Naive thymus-derived CD8-positive, alpha-beta T cell (primary cell): ENCODE measurements at regions of chr6 and their contacts with region 1.

Region 1: GRCh38 chr6:20366091-20366832 is 35.4 kb upstream of the E2F3 start:
- DNase-seq: peak; percentile 7 to 81 (median 42)
- ATAC-seq: peak; percentile 85 to 94
- H3K4me3 Mint-ChIP-seq: peak overlapping the region; percentile 64 to 90 (median 81)
- H3K27ac Mint-ChIP-seq: peak overlapping the region; percentile 86 to 99 (median 96)
- H3K4me1 Mint-ChIP-seq: peaks cover 34 to 66% (median 64%) of the 10 kb centered on the region in 4 donors
- H3K27me3 Mint-ChIP-seq: no peaks in the 10 kb centered on the region

Region 2: GRCh38 chr6:20137240-20137639 is 229.0 kb before region 1 on chr6:
- POLR2A ChIA-PET with region 1: no interaction called
- DNase-seq: no peak
- ATAC-seq: no peak
- H3K4me3 Mint-ChIP-seq: no peak overlapping the region
- H3K27ac Mint-ChIP-seq: no peak overlapping the region
- H3K4me1 Mint-ChIP-seq: no peaks in the 10 kb centered on the region
- H3K27me3 Mint-ChIP-seq: no peaks in the 10 kb centered on the region

Region 3: DNA sequence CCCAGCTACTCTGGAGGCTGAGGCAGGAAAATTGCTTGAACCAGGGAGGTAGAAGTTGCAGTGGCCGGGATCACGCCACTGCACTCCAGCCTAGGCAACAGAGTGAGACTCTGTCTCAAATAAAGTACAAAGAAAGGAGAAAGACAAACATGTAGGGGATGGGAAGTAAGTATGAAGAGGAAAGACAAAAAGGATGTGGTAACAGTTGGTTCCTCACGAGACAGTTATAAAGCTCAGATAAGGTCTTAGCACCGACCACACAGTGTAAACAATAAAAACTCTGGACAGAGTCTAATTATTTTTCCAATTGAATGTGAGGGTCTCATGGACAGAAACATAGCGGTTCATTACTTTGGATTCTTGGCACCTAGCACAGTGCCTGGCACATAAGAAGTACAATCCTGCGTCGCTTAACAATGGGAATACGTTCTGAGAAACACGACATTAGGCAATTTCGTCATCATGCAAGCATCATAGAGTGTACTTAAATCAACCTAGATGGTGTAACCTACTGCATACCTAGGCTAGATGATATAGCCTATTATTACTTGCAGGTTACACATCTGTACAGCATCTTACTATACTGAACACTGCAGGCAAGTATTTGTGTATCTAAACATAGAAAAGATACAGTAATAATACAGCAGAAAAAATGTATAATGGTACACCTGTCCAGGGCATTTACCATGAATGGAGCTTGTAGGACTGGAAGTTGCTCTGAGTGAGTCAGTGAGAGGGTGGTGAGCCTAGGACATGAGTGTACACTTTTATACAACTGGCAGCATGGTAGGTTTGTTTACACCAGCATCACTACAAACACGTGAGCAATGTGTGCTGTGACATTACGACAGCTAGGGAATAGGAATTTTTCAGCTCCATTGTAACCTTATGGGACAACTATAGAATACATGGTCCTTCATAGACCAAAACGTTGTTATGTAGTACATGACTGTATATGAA is 192.1 kb before region 1 on chr6:
- POLR2A ChIA-PET with region 1: no interaction called
- DNase-seq: peak in 2 of 10 donors; percentile 3 to 8
- ATAC-seq: peak in 1 of 2 donors; percentile 50
- H3K4me3 Mint-ChIP-seq: peak overlapping the region in 9 of 10 donors; percentile 2 to 74 (median 39)
- H3K27ac Mint-ChIP-seq: peak overlapping the region in 6 of 10 donors; percentile 4 to 84 (median 52)
- H3K4me1 Mint-ChIP-seq: peaks cover 9 to 30% (median 19%) of the 10 kb centered on the region in 4 donors
- H3K27me3 Mint-ChIP-seq: peaks cover 0 to 3% (median 0%) of the 10 kb centered on the region in 5 donors

Region 4: DNA sequence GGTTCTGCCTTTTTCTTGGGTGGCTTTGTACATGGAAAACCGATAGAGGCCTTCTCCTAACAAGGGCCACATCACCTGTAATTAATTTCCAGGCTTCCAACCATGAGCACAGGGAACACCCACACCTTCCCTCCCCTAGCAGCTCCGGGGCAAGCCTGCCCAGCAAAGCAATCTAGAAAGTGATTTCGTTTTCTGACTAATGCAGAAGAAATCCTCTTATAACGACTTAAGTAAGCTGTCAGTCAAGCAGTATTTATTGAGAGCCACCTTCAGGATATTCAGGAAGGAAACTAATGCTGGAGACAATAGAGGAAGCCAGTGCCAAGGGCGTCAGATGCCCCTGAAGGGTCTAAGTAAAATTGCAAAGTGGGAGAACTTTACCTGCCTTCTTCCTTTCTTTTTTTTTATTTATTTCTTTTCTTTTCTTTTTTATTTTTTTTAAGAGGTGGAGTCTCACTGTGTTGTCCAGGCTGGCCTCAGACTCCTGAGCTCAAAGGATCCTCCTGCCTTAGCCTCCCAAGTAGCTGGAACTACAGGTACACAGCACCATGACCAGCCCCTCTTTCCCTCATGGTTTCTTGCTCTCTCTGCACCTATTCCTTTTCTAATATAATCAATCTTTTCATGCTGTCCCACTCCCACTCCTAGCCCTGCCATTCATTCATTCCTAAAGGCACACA is 86.5 kb before region 1 on chr6:
- POLR2A ChIA-PET with region 1: no interaction called
- DNase-seq: no peak
- ATAC-seq: no peak
- H3K4me3 Mint-ChIP-seq: no peak overlapping the region
- H3K27ac Mint-ChIP-seq: no peak overlapping the region
- H3K4me1 Mint-ChIP-seq: no peaks in the 10 kb centered on the region
- H3K27me3 Mint-ChIP-seq: peaks cover 16 to 40% (median 32%) of the 10 kb centered on the region in 5 donors

Region 5: DNA sequence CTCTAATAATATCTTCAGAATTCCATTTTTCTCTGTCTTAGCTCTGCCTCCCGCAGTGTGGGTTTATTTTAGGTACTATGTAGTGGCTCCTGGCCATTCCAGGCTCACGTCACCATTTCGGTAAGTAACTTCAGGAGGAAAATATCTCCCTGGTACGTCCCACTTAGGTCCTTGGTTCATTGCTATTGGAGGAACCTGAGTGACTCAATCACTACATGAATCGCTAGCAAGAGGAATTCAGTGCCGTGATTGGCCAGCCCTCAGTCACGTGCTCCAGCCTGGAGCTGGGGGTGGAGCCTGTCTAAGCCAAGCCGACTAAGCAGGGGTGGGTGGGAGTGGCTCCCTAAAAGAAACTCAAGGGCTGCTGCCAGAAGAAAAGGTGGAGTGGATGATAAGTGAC is 31.9 kb before region 1 on chr6:
- POLR2A ChIA-PET with region 1: interaction called, 21 read pairs
- DNase-seq: no peak
- ATAC-seq: no peak
- H3K4me3 Mint-ChIP-seq: no peak overlapping the region
- H3K27ac Mint-ChIP-seq: peak overlapping the region in 1 of 10 donors; percentile 12
- H3K4me1 Mint-ChIP-seq: peaks cover 17 to 32% (median 23%) of the 10 kb centered on the region in 4 donors
- H3K27me3 Mint-ChIP-seq: no peaks in the 10 kb centered on the region

Region 6: DNA sequence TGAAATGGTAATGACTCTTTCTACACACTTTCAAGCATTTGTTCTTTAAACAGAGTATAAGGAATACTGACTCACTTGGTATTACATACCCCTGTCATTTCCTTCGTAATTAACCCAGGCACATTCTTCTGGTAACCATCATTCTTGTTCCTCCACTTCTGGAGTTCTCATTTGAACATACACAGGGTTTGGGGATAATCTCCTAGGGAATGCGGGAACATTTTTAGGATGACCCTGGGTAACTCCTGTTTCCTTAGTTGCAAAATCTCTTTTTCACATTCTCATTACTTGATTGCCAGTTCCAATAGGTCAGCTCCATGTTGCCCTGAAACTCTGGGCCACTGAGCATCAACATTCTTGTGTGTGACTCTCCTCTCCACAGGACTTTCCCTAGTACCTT is 16.0 kb before region 1 on chr6:
- POLR2A ChIA-PET with region 1: interaction called, 15 read pairs
- DNase-seq: no peak
- ATAC-seq: no peak
- H3K4me3 Mint-ChIP-seq: no peak overlapping the region
- H3K27ac Mint-ChIP-seq: no peak overlapping the region
- H3K4me1 Mint-ChIP-seq: peaks cover 0 to 2% (median under 1%) of the 10 kb centered on the region in 4 donors
- H3K27me3 Mint-ChIP-seq: peaks cover 0 to 1% (median 0%) of the 10 kb centered on the region in 5 donors

Region 7: GRCh38 chr6:20377623-20378265 is 11.5 kb after region 1 on chr6:
- POLR2A ChIA-PET with region 1: interaction called, 49 read pairs
- DNase-seq: no peak
- ATAC-seq: no peak
- H3K4me3 Mint-ChIP-seq: no peak overlapping the region
- H3K27ac Mint-ChIP-seq: peak overlapping the region in 2 of 10 donors; percentile 29 to 63
- H3K4me1 Mint-ChIP-seq: peaks cover 6 to 29% (median 12%) of the 10 kb centered on the region in 4 donors
- H3K27me3 Mint-ChIP-seq: no peaks in the 10 kb centered on the region

Region 8: DNA sequence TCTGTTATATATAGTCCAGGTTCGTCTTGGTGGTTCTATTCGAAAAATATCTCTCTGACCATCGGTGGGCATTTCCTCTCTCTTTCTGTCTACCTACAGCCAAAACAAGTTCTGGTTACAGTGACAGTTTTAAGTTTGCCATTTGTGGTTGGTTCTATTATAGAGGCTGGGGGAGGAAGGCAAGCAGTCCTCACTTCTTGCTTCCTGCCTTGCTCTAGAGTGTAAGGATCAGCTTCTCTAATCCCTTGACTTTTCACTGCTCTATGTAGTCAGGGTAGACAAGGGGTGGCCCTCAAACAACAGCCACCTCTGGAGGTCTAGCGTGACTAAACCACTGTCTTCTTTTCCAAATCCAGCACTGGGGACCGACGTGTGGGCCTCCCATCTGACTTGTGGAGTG is 51.6 kb after region 1 on chr6:
- POLR2A ChIA-PET with region 1: no interaction called
- DNase-seq: no peak
- ATAC-seq: no peak
- H3K4me3 Mint-ChIP-seq: peak overlapping the region in 8 of 10 donors; percentile 3 to 64 (median 42)
- H3K27ac Mint-ChIP-seq: peak overlapping the region in 6 of 10 donors; percentile 6 to 60 (median 24)
- H3K4me1 Mint-ChIP-seq: peaks cover 38 to 63% (median 56%) of the 10 kb centered on the region in 4 donors
- H3K27me3 Mint-ChIP-seq: no peaks in the 10 kb centered on the region